WTC11 (cell line): ENCODE measurements at regions of chr19 and their contacts with region 1.

Region 1: DNA sequence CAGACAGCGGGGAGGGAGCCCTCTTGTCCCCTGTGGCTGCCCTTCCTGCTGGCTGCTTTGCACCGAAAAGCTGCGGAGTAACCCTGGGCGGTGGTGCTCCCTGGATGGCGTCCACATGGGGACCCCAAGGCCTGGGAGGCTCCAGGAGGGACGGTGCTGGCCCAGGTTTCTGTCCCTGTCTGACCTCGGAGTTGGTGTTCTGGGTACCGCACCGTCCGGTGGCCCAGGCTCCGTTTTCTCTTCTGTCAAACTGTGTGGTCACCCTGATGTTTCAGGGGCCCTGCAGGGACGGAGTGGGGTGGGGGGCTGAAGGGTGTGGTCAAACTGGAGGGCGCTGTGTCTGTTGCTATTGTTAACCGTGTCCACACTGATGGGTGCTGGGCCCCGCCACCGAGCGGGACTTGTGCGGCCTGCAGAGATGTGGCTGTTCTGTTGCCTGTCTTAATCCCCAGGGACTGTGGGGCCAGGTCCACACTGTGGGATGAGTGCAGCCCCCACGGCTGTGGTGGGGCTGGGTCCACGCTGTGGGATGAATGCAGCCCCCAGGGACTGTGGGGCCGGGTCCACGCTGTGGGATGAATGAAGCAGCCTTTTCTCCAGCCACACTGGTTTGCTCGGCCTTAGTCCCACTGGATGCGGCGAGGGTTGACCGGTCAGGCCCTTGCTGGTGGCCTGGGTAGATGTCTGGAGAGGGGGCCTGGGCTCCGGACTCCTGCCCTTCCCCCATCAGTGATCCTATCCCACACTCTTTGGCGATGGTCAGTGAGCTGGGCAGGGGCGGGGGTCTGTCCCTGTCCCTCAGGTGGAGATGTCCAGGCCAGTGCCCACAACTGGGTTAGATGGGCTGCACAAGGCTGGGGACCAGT is 6.9 kb downstream of the GNA11 start:
- DNase-seq: no peak
- ATAC-seq: no peak
- H3K4me3 Mint-ChIP-seq: no peak overlapping the region
- H3K27ac Mint-ChIP-seq: peak overlapping the region; percentile 45
- H3K4me1 Mint-ChIP-seq: peaks cover 11% of the 10 kb centered on the region
- H3K27me3 Mint-ChIP-seq: no peaks in the 10 kb centered on the region
- CTCF ChIP-seq: no peak

Region 2: GRCh38 chr19:2887391-2887914 is 213.6 kb before region 1 on chr19:
- CTCF ChIA-PET with region 1: interaction called, 15 read pairs
- POLR2A ChIA-PET with region 1: no interaction called
- DNase-seq: no peak
- ATAC-seq: peak; percentile 95
- H3K4me3 Mint-ChIP-seq: no peak overlapping the region
- H3K27ac Mint-ChIP-seq: peak overlapping the region; percentile 28
- H3K4me1 Mint-ChIP-seq: peaks cover 8% of the 10 kb centered on the region
- H3K27me3 Mint-ChIP-seq: no peaks in the 10 kb centered on the region; the same call in 1 of the 2 replicates
- CTCF ChIP-seq: peak; percentile 25

Region 3: DNA sequence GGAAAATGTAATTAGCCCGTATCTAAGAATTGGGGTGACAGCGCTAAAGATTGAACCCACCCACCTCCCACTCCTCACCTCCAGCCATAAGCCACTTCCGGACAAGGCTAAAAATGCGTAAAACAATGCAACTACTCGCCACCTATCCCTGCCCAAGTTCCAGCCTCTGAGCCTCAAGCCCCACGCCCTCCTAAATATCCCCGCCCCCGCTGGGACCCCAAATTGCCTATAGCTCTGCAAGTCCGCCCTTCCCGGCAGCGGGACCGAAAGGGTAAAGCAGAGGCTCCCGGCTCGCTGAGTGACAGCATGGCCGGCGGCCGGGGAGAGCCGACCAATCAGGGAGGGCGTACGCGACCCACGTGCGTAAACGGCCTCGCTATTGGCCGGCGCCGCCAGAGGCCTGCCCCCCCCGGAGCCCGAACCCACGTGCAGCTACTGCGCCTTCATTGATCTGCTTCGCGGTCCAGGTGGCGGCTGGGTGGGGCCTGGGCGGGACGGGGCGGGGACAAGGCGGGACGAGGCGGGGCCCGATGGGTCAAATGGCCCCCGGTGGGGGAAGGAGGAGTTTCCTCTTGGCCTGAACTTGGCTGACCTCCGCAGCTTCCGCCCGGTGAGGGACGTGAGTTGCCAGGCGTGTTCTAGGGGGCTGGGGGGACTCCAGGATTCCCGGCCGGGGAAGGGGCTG is 124.0 kb before region 1 on chr19 and contains the start of gene TLE6:
- CTCF ChIA-PET with region 1: interaction called, 22 read pairs
- POLR2A ChIA-PET with region 1: no interaction called
- DNase-seq: peak; percentile 99
- ATAC-seq: peak; percentile 86
- H3K4me3 Mint-ChIP-seq: peak within 1 kb of the TSS; percentile 71
- H3K27ac Mint-ChIP-seq: no peak within 1 kb of the TSS
- H3K4me1 Mint-ChIP-seq: peaks cover 27% of the 10 kb centered on the region
- H3K27me3 Mint-ChIP-seq: peaks cover 58% of the 10 kb centered on the region
- CTCF ChIP-seq: no peak
- total RNA-seq, gene TLE6: 2.5 to 3.3 TPM (median 3.1 TPM) in 3 replicates

Region 4: GRCh38 chr19:3015126-3016057 is 85.7 kb before region 1 on chr19:
- CTCF ChIA-PET with region 1: interaction called, 13 read pairs
- POLR2A ChIA-PET with region 1: no interaction called
- DNase-seq: no peak
- ATAC-seq: no peak
- H3K4me3 Mint-ChIP-seq: no peak overlapping the region
- H3K27ac Mint-ChIP-seq: no peak overlapping the region
- H3K4me1 Mint-ChIP-seq: peaks cover 4% of the 10 kb centered on the region; the same call in 1 of the 2 replicates
- H3K27me3 Mint-ChIP-seq: no peaks in the 10 kb centered on the region
- CTCF ChIP-seq: no peak

Region 5: DNA sequence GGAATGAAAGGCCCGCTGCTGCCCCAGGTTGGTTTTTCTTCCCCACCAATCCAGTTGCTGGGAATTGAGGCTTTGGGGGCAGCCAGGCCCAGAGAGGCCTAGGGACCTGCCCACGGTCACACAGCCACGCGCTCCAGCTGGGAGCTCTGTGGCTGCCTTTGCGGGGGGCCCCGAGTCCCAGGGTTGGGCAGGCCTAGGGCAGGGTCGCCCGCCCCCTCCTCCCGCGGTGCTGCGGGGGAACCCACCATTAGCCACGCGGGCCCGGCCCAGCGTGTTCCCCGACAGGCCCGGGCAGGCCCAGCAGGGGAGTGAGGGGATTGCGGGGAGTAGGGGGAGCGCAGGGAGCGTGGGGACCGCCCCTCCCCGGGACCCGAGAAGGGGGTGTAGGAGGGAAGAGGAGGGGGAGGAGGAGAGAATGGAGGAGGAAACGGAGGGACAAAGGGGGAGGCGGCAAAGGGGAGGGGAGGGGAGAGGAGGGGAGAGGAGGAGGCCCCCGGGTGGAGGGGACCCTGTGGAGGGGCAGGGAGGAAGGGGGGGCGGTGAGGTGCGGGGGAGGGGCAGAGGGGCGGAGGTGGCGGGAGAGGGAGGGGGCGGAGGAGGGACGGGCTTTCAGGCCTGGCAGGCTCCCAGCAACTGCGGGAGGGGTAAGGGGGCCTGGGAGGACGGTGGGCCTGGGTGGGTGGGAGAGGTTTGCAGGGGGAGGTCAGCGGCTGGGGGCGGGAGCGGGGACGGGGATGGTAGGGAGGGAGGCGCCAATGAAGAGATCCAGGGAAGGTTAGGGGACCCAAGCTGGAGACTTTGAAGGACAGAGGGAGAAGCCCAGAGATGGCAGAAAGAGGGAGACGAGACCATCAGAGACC is 59.1 kb before region 1 on chr19:
- CTCF ChIA-PET with region 1: interaction called, 36 read pairs
- POLR2A ChIA-PET with region 1: no interaction called
- DNase-seq: no peak
- ATAC-seq: no peak; the same call in 1 of the 2 replicates
- H3K4me3 Mint-ChIP-seq: peak overlapping the region; percentile 60
- H3K27ac Mint-ChIP-seq: no peak overlapping the region
- H3K4me1 Mint-ChIP-seq: peaks cover 34% of the 10 kb centered on the region
- H3K27me3 Mint-ChIP-seq: peaks cover 49% of the 10 kb centered on the region
- CTCF ChIP-seq: no peak

Region 6: DNA sequence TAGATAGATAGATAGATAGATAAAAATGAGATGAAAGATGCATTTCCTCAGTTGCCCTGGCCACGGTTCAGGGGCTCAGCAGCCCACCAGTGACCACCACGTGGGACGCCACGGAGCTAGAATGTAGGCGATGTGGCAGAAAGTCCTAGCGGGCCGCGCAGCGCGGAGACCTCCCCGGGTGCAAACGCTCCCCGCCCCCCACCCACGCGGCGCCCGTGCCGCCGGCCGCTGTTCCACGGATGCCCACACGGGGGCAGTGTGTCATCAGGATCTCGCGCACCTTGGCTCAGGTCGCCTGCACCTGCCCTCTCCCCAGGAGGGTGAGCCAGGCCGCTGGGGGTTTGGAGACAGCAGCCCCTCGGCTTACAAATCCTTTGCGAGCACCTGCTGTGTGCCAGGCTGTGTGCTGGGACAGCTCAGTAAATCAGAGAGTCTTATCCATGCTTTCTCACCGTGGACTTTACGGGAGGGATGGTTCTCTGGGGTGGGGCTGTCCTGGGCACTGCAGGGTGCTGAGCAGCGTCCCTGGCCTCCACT is 25.1 kb before region 1 on chr19:
- CTCF ChIA-PET with region 1: interaction called, 65 read pairs
- POLR2A ChIA-PET with region 1: no interaction called
- DNase-seq: peak; percentile 76
- ATAC-seq: peak; percentile 78
- H3K4me3 Mint-ChIP-seq: peak overlapping the region; percentile 54
- H3K27ac Mint-ChIP-seq: no peak overlapping the region
- H3K4me1 Mint-ChIP-seq: peaks cover 2% of the 10 kb centered on the region; the same call in 1 of the 2 replicates
- H3K27me3 Mint-ChIP-seq: peaks cover 4% of the 10 kb centered on the region
- CTCF ChIP-seq: peak; percentile 81